ENCODE measurements at regions of chr1 and their contacts with region 1.

Region 1: GRCh38 chr1:59414406-59415133 is 117.7 kb downstream of the FGGY start:
- DNase-seq: no peak
- H3K4me3 ChIP-seq: no peak overlapping the region
- CTCF ChIP-seq: no peak

Region 2: DNA sequence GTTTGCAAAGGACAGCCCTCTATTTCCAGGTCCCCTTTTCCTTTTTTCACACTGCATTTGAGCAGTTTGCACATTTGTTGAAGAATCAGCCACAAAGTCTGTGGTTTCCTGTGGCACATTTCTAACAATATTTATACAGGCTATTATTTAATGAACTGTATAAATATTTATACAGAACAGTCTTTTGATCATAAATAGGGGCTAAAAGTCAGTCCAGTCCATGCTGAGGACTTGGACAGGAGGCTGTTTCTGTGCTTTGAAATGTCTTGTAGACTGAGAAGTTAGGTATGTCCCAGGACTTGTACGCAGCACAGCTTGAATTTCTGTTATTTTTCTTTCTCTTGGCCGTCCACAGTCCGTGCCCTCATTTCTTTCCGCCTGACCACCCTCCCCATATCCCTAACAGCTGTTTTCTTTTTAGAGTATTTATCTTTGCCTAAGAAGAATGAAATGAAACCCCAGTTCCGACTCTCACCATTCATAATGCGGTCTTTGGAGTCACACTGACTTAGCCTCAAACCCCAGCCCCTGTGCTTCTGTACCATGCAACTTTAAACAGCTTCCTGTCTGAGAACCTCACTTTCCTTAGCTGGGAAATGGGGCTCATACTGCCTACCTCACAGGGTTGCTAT is 98.0 kb before region 1 on chr1:
- in situ Hi-C with region 1: loop called (anchors 5 kb)
- DNase-seq: peak; percentile 98
- H3K4me3 ChIP-seq: no peak overlapping the region
- CTCF ChIP-seq: no peak

Region 3: DNA sequence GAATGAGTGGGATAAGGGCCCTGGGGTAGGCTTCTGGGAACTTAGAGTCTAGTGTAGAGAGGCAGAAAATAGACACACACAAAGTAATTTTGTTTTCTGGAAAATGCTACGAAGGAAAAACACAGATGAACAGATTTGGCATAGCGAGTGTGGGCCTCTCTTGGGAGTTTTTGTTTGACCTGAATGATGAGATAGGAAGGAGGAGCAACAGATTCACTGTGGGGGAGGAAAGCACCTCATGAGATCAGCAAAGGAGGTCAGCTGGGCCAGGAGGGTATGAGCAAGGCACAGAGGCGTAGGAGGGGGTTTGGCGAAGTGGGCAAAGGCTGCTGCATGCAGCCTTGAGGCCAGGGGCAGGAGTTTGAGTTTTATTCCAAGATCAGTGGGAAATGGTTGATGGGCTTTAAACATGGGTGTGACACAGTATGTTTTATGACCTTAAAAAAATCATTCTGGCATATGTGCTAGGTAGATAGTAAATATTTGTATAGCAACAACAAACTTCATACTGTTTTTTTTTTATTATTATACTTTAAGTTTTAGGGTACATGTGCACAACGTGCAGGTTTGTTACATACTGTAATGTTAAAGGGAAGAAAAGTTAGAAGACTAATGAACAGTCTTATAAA is 59.7 kb before region 1 on chr1:
- in situ Hi-C with region 1: no loop called
- DNase-seq: no peak
- H3K4me3 ChIP-seq: no peak overlapping the region
- CTCF ChIP-seq: no peak